ENCODE measurements at regions of chr11 and their contacts with region 1.

Region 1: GRCh38 chr11:57196596-57196995 is 14.8 kb downstream of the LRRC55 start:
- DNase-seq: no peak
- ATAC-seq: peak; percentile 28

Region 2: DNA sequence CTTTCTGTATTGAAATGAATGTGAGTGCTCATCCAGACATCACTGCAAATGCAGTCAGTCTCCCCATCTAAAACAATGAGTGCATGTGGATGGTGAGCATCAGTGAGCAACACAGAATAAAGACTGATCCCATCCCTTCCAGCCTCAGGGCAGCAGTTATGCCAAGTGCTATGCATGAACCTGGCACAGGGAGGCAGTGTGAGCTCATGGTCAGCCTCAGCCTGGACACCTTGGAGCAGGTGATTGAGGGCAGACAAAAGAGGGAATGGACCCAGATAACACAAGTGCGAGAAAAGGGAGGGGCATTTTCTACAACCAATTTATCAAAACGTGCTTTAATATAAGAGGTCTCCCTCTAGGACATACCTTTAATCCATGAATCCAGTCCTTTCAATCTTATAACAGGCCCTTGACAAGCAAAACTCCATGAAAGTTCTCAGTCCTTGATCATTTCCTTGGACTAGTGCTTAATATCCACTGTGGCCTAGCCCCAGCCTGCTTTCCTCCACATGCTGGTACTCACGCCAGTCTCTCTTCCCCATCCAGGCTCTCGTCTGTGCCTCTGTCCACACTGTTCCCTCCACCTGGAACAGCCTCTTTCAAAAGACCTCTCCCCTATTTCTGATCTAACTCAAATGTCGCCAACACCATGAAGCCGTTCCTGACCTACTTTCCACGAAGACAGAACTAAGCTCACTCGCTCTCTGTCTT is 65.4 kb before region 1 on chr11:
- intact Hi-C with region 1: loop called (anchors 10 kb)
- DNase-seq: peak; percentile 38
- ATAC-seq: peak; percentile 69

Region 3: DNA sequence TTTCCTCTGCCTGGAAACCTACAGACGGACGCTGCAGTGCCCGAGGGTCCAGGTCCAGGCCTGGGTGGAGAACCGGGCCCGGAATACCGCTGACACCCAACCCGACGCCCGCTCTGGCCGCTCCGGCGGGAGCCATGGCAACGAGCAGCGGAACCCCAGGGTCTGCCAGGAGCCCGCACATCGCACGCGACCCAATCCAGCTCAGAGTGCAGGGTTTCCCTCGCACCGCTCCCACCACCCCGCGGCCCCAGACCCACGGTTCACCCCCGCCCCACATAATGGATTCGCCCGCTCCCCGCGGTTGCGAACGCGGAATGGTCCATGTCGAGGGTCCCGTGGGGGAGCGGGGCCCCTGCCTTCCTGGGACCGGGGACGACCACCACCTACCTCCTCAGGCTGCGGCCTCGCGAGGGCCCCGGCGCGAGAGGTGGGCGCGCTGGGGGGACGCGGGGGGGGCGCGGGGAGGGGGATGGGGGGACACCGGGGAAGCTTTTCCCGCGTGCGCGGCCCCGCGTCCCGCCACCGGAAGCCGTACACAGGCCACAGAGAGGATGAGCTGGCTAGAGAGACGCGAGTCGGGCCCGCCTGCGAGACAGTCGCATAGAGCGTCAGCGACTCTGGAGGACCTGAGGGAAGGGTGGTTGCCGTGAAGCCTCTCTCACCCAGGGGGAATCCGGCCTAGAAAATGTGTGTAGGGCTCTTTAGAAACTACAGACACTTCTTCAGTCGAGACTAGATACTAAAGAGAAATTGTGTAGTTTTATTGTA is 138.9 kb after region 1 on chr11 and contains the start of gene SSRP1:
- intact Hi-C with region 1: no loop called
- DNase-seq: peak; percentile 94
- ATAC-seq: peak; percentile 98
- total RNA-seq, gene SSRP1: 38.4 TPM

Measured in left ventricle myocardium superior (tissue), 1 donor.